IMR-90 (cell line): ENCODE measurements at regions of chr17 and their contacts with region 1.

Region 1: GRCh38 chr17:44376124-44376523 is 12.5 kb upstream of the FAM171A2 start:
- DNase-seq: peak; percentile 10
- ATAC-seq: peak; percentile 81
- H3K4me3 ChIP-seq: no peak overlapping the region
- H3K27ac ChIP-seq: no peak overlapping the region
- H3K4me1 ChIP-seq: peaks cover 2% of the 10 kb centered on the region; the same call in 1 of the 2 replicates
- H3K27me3 ChIP-seq: peaks cover 18% of the 10 kb centered on the region
- CTCF ChIP-seq: peak; percentile 41
- POLR2A ChIP-seq: no peak
- RAD21 ChIP-seq: no peak

Region 2: DNA sequence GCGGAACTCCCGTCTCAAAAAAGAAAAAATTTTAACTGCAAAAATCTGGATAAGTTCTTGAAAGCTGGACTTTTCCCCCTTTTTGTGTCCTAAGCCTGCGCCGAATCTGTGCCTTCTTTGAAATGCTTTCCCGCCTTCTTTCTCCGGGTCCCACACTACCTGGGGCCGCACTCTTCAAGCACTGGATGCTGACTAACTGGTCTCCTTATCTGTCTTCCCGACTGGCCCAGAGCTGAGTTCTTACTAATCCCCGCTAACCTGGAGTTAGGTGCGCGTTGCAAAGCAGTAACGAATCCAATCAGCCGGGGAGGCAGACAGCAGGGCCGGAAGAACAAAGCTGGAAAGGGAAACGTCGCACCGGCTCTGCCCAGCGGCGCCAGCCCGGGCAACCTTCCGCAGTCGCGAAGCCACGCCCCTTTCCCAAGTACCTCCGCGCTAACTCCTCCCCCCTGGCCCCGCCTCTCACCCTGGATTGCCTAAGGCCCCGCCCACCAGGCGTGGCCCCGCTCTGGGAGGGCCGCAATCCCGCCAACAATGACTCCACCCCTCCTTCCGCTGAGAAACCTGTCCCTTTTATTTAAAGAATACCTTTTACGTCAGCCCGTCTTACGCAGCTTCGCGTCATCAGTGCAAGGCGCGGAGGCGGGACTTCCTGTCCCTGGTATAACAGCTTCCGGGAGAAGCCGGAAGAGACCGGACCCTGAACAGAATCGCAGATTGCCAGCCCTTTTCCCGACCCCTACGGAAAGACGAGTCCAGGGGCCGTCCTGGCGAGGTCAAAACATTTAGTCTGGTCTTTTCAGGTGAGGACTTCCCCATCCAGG is 189.6 kb before region 1 on chr17 and contains the start of gene TMUB2:
- CTCF ChIA-PET with region 1: no interaction called
- POLR2A ChIA-PET with region 1: no interaction called
- dilution Hi-C with region 1: no loop called
- in situ Hi-C with region 1: no loop called
- intact Hi-C with region 1: no loop called
- DNase-seq: peak; percentile 100
- ATAC-seq: peak; percentile 98
- H3K4me3 ChIP-seq: peak within 1 kb of the TSS; percentile 79
- H3K27ac ChIP-seq: peak within 1 kb of the TSS; percentile 96
- H3K4me1 ChIP-seq: peaks cover 2% of the 10 kb centered on the region; the same call in 1 of the 2 replicates
- H3K27me3 ChIP-seq: no peaks in the 10 kb centered on the region
- CTCF ChIP-seq: no peak
- POLR2A ChIP-seq: peak; percentile 69
- RAD21 ChIP-seq: no peak; the same call in 1 of the 2 replicates
- total RNA-seq, gene TMUB2: 16.5 and 17.8 TPM in 2 replicates

Region 3: DNA sequence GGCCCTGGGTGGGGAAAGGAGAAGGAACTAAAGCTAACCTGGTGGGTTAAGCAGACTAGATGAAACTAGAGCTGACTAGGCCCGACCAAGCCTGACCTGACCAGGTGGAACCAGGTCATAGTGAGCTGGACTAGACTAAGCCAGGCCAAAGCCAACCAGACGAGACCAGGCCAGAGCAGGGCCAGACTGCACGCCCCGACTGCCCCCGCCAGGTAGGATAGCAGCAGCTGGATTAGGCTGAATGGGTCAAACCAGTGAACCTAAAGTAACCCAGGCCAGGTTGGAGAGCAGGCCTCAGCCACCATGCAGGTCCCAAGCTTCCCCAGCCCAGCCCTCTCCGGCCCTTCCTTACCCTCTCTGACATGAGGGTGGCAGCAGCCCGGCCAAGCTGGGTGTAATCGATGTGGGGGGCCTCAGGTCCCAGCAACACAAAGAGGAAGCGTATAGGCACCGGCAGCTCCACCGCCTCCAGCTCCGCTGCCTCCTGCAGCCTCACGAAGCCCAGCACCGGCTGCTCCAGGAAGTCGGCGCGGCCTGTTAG is 117.2 kb before region 1 on chr17:
- CTCF ChIA-PET with region 1: no interaction called
- POLR2A ChIA-PET with region 1: no interaction called
- dilution Hi-C with region 1: no loop called
- in situ Hi-C with region 1: no loop called
- intact Hi-C with region 1: no loop called
- DNase-seq: no peak
- ATAC-seq: no peak
- H3K4me3 ChIP-seq: no peak overlapping the region
- H3K27ac ChIP-seq: no peak overlapping the region
- H3K4me1 ChIP-seq: no peaks in the 10 kb centered on the region
- H3K27me3 ChIP-seq: peaks cover 64% of the 10 kb centered on the region
- CTCF ChIP-seq: no peak
- POLR2A ChIP-seq: no peak
- RAD21 ChIP-seq: no peak

Region 4: DNA sequence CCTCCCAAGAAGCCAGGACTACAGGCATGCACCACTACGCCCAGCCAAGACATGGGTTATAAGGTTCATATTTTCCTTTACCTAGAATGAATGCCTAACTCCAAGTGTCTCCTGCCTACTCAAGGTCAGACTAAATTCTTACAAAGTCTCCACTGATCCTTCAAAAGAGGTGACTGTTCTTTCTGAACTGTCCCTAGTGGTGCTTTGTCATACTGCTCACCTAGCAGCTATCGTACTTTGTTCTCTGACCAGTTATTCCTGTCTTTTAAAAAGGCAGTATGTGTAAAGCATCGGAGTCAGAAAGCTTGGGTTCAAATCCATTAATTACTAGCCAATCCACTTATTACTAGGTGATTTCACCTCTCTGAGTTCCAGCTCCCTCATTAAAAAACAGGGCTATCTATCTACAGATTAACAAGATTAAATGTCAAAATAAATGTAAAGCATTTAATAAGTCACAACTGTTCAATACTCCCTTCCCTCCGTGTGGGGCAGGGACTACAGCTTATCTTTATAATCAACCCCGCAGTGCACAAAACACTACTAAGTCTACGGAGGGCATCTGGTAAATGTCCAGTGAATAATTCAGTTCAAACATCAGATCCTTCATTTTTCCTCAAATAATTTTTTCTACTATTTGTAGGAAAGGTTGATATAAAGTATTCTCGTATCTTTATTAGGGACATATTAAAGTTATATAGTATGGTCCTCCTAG is 33.3 kb after region 1 on chr17:
- CTCF ChIA-PET with region 1: no interaction called
- POLR2A ChIA-PET with region 1: no interaction called
- dilution Hi-C with region 1: no loop called
- in situ Hi-C with region 1: no loop called
- intact Hi-C with region 1: no loop called
- DNase-seq: no peak
- ATAC-seq: no peak
- H3K4me3 ChIP-seq: no peak overlapping the region
- H3K27ac ChIP-seq: no peak overlapping the region
- H3K4me1 ChIP-seq: no peaks in the 10 kb centered on the region
- H3K27me3 ChIP-seq: no peaks in the 10 kb centered on the region
- CTCF ChIP-seq: no peak
- POLR2A ChIP-seq: no peak
- RAD21 ChIP-seq: no peak

Region 5: DNA sequence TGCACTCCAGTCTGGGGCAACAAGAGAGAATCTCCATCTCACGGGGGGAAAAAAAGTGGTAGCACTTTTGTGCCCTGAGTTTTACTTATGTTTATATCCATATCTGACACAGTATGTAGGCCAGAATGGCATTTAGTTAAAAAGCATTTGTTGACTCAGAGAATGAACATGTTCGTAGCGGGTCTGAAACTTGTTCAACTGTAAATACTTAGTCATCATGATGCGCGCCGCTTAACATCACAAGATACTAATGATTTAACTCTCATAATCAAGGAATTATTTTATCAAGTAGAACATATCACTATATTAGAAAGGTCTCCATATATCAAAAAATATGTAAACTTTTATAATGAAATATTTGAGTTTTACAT is 68.6 kb after region 1 on chr17:
- CTCF ChIA-PET with region 1: interaction called, 10 read pairs
- POLR2A ChIA-PET with region 1: no interaction called
- dilution Hi-C with region 1: no loop called
- in situ Hi-C with region 1: no loop called
- intact Hi-C with region 1: no loop called
- DNase-seq: peak; percentile 97
- ATAC-seq: peak; percentile 96
- H3K4me3 ChIP-seq: no peak overlapping the region; the same call in 1 of the 2 replicates
- H3K27ac ChIP-seq: peak overlapping the region; percentile 89
- H3K4me1 ChIP-seq: 0 out of 2 replicates have a peak, but pooled peaks cover 6% of the 10 kb centered on the region
- H3K27me3 ChIP-seq: no peaks in the 10 kb centered on the region
- CTCF ChIP-seq: no peak
- POLR2A ChIP-seq: no peak
- RAD21 ChIP-seq: no peak

Region 6: GRCh38 chr17:44842748-44843147 is 466.6 kb after region 1 on chr17:
- CTCF ChIA-PET with region 1: no interaction called
- POLR2A ChIA-PET with region 1: no interaction called
- dilution Hi-C with region 1: no loop called
- in situ Hi-C with region 1: no loop called
- intact Hi-C with region 1: no loop called
- DNase-seq: peak; percentile 15
- ATAC-seq: no peak
- H3K4me3 ChIP-seq: no peak overlapping the region
- H3K27ac ChIP-seq: no peak overlapping the region
- H3K4me1 ChIP-seq: peaks cover 13% of the 10 kb centered on the region
- H3K27me3 ChIP-seq: no peaks in the 10 kb centered on the region
- CTCF ChIP-seq: no peak
- POLR2A ChIP-seq: no peak
- RAD21 ChIP-seq: no peak